ENCODE measurements at regions of chr6 and their contacts with region 1.

Region 1: DNA sequence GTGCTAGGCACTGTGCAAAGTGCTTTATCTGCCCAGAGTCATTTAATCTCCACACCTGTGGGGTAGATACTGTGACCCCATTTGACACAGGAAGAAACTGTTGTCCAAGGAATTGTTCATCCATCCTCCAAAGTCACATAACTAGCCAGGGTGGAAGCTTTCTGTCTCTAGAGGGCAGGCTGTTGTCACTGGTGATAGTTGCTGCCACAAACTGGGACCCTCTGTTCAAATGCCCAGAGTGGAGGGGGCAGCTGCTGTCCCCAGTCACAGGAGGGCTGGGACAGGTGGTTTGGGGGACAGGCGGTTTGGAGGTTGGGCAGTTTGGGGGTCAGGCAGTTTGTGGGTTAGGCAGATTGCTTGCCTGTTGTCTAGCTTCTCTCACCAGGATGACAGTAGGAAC is 16.1 kb upstream of the TMEM242 start:
- DNase-seq: no peak
- ATAC-seq: peak; percentile 64
- H3K4me3 ChIP-seq: no peak overlapping the region
- H3K27ac ChIP-seq: no peak overlapping the region
- H3K4me1 ChIP-seq: no peaks in the 10 kb centered on the region
- H3K27me3 ChIP-seq: peaks cover 0 to 2% of the 10 kb centered on the region in 2 experiments; a peak in 1 of 4 replicates
- CTCF ChIP-seq: peak; percentile 14 to 48 (median 20); a peak in 3 of 6 replicates
- EP300 ChIP-seq: no peak
- POLR2A ChIP-seq: no peak
- RAD21 ChIP-seq: peak; percentile 20; the same call in 1 of the 2 replicates

Region 2: DNA sequence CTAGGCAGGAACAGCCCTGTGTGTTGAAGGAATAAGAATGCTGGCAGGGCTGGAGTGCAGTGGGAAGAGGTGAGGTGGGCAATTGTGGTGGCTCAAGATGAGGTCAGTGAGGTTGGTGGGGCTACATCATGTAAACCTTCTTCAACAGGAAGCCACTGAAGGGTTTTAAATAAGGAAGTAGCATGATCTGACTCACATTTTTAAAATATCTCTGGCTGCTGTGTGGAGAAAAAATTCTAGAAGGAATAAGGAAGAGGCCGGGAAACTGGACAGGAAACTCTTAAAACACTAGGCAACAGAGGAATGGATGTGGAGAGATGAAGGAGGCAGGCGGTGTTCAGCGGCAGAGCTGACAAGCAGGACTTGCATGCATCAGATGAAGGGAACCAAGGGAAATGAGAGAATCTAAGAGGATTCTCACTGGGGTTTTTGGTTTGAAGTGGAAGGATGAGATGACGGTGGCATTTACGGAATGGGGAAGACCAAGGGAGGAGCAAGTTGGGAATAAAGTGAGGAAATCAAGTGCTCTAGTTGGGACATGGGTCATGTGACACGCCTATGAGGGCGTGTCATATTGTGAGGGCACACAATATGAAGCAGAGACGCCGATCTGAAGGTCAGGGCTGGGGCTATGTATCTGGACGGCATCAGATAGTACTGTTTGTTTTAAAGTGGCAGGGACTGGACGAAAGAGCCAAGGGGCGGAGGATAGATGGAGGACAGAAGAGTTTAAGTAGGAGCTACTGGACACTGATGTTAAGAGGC is 34.4 kb before region 1 on chr6:
- CTCF ChIA-PET with region 1: no interaction called
- POLR2A ChIA-PET with region 1: no interaction called
- RAD21 ChIA-PET with region 1: no interaction called
- SMC1A ChIA-PET with region 1: no interaction called
- in situ Hi-C with region 1: no loop called
- intact Hi-C with region 1: no loop called
- DNase-seq: no peak
- ATAC-seq: peak; percentile 30; the same call in 1 of the 3 replicates
- H3K4me3 ChIP-seq: no peak overlapping the region
- H3K27ac ChIP-seq: no peak overlapping the region
- H3K4me1 ChIP-seq: no peaks in the 10 kb centered on the region
- H3K27me3 ChIP-seq: no peaks in the 10 kb centered on the region
- CTCF ChIP-seq: no peak
- EP300 ChIP-seq: no peak
- POLR2A ChIP-seq: no peak
- RAD21 ChIP-seq: no peak

Region 3: GRCh38 chr6:157368359-157369049 is 29.1 kb after region 1 on chr6:
- CTCF ChIA-PET with region 1: interaction called, 5 read pairs
- POLR2A ChIA-PET with region 1: no interaction called
- RAD21 ChIA-PET with region 1: interaction called, 3 read pairs
- SMC1A ChIA-PET with region 1: interaction called, 10 read pairs
- in situ Hi-C with region 1: no loop called
- intact Hi-C with region 1: no loop called
- DNase-seq: no peak
- ATAC-seq: peak; percentile 49
- H3K4me3 ChIP-seq: no peak overlapping the region
- H3K27ac ChIP-seq: no peak overlapping the region
- H3K4me1 ChIP-seq: peaks cover 15% of the 10 kb centered on the region
- H3K27me3 ChIP-seq: peaks cover 0 to 12% of the 10 kb centered on the region in 2 experiments; a peak in 3 of 4 replicates
- CTCF ChIP-seq: no peak
- EP300 ChIP-seq: no peak
- POLR2A ChIP-seq: no peak
- RAD21 ChIP-seq: no peak

Region 4: GRCh38 chr6:157614026-157614568 is 274.7 kb after region 1 on chr6:
- CTCF ChIA-PET with region 1: interaction called, 11 read pairs
- POLR2A ChIA-PET with region 1: no interaction called
- RAD21 ChIA-PET with region 1: interaction called, 5 read pairs
- SMC1A ChIA-PET with region 1: interaction called, 3 read pairs
- in situ Hi-C with region 1: no loop called
- intact Hi-C with region 1: no loop called
- DNase-seq: no peak
- ATAC-seq: peak; percentile 79
- H3K4me3 ChIP-seq: no peak overlapping the region
- H3K27ac ChIP-seq: no peak overlapping the region
- H3K4me1 ChIP-seq: no peaks in the 10 kb centered on the region
- H3K27me3 ChIP-seq: no peaks in the 10 kb centered on the region
- CTCF ChIP-seq: peak in 2 of 3 experiments; percentile 13 to 44; a peak in 2 of 6 replicates
- EP300 ChIP-seq: no peak
- POLR2A ChIP-seq: no peak
- RAD21 ChIP-seq: peak; percentile 41; the same call in 1 of the 2 replicates

Measured in GM12878 (cell line).